ENCODE measurements at regions of chr1 and their contacts with region 1.

Region 1: DNA sequence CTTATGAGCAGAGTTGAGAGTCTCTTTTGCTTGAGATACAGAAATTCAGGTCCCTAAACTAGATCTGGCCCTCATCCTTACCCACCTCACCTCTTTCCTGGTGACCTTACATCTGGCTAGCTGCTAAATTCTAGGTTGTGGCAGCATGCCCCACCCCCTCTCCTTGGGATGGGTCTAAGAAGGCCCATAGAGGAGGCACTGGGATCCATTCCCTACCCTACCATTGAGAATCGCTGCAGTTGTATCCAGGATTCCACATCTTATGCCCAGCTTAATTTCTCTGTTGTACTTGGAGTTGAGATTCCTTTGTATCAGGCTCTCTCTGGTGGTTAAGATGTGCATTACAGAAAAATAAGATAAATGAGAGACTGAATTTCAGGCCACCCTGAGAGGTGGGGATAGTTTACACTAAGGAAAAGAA is 9.5 kb upstream of the TMEM39B start:
- DNase-seq: peak; percentile 76
- ATAC-seq: peak; percentile 64
- H3K4me3 ChIP-seq: no peak overlapping the region
- H3K27ac ChIP-seq: peak overlapping the region; percentile 60
- H3K4me1 ChIP-seq: peaks cover 14% of the 10 kb centered on the region
- H3K27me3 ChIP-seq: no peaks in the 10 kb centered on the region
- CTCF ChIP-seq: peak; percentile 70
- POLR2A ChIP-seq: no peak
- RAD21 ChIP-seq: peak; percentile 78

Region 2: GRCh38 chr1:31762726-31763670 is 300.3 kb before region 1 on chr1:
- CTCF ChIA-PET with region 1: no interaction called
- POLR2A ChIA-PET with region 1: no interaction called
- dilution Hi-C with region 1: no loop called
- in situ Hi-C with region 1: no loop called
- intact Hi-C with region 1: loop called (anchors 1 kb)
- DNase-seq: peak; percentile 27
- ATAC-seq: peak; percentile 40
- H3K4me3 ChIP-seq: peak overlapping the region; percentile 47
- H3K27ac ChIP-seq: no peak overlapping the region
- H3K4me1 ChIP-seq: peaks cover 21% of the 10 kb centered on the region
- H3K27me3 ChIP-seq: peaks cover 7% of the 10 kb centered on the region
- CTCF ChIP-seq: peak; percentile 71
- POLR2A ChIP-seq: no peak
- RAD21 ChIP-seq: peak; percentile 56

Region 3: DNA sequence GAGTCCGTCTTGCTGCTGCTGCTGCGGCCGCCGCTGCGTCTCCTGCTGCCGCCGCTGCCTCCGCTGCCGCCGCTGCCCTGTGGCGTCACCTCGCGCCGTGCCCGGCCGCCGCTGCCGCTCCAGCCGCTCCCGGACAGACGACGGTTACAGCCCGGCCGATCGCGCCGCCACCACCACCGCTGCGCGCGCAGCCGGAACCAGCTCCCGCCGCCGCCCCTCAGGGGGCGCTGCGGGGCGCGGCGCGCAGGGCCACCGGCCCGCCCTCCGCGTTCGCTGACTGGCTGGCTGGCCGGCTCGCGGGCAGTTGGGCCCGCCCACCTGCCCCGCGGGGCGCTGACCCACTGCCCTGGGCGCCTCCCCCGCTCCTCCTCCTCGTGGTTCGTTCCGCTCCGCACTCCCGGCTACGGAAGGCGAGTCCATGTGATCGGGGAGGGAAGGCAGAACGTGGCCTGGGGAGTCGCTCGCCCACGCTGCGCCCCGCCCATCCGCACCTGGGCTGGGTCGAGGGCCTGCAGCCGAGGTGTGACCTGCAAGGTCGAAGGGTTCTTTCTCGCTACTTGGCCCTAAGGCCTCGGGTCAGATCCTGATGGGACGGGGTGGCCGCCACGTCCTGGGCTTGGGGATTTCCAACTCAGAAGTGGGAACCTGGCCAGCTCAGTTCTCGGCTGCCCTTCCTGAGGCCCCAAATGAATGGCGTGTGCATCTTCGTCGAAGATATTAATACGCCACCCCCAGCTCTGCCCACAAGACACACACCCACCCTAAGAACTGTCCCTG is 124.9 kb before region 1 on chr1 and contains the start of gene PTP4A2:
- CTCF ChIA-PET with region 1: interaction called, 4 read pairs
- POLR2A ChIA-PET with region 1: interaction called, 3 read pairs
- dilution Hi-C with region 1: no loop called
- in situ Hi-C with region 1: no loop called
- intact Hi-C with region 1: loop called (anchors 2 kb)
- DNase-seq: peak; percentile 88
- ATAC-seq: peak; percentile 89
- H3K4me3 ChIP-seq: peak within 1 kb of the TSS; percentile 66
- H3K27ac ChIP-seq: peak within 1 kb of the TSS; percentile 98
- H3K4me1 ChIP-seq: peaks cover 16% of the 10 kb centered on the region
- H3K27me3 ChIP-seq: no peaks in the 10 kb centered on the region
- CTCF ChIP-seq: peak; percentile 86
- POLR2A ChIP-seq: peak; percentile 78
- RAD21 ChIP-seq: peak; percentile 32; the same call in 1 of the 2 replicates
- total RNA-seq, gene PTP4A2: 328 and 537 TPM in 2 replicates

Region 4: DNA sequence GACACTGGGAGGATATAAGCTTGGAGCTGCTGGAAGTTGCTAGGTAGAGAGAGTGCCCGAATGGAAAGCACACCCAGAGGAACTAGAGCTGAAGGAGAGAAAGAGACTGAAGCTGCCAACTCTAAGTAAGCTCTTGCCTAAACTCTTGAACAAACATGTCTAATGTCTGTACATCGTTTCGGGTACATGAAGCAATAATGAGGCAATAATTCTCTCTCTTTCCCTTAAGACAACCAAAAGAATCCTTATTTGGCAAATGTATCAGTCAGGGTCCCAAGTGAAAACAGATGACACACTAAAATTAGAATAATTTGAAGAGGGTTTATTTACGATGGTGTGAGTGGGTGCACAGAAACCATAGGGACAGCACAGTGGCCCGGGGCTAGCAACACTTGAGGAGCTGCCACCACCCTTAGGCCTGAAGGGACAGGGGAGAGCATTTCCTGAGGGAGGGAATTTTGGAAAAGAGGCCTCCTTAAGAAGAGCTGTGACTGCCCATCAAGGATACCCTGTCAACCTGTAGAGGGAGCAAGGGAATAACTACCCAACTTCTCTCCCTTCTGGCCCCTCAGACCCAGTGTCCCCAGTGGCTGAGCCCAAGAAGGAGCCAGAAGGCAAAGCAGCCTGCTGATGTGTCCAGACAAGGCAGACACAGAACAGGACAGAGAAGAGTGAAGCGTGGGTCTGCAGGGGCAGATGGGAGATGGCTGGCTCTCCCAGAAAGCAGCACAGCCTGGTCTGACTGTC is 85.7 kb before region 1 on chr1:
- CTCF ChIA-PET with region 1: no interaction called
- POLR2A ChIA-PET with region 1: no interaction called
- dilution Hi-C with region 1: no loop called
- in situ Hi-C with region 1: no loop called
- intact Hi-C with region 1: loop called (anchors 2 kb)
- DNase-seq: peak; percentile 47
- ATAC-seq: peak; percentile 75
- H3K4me3 ChIP-seq: no peak overlapping the region
- H3K27ac ChIP-seq: peak overlapping the region; percentile 22; the same call in 1 of the 2 replicates
- H3K4me1 ChIP-seq: peaks cover 6% of the 10 kb centered on the region
- H3K27me3 ChIP-seq: peaks cover 5% of the 10 kb centered on the region
- CTCF ChIP-seq: peak; percentile 39
- POLR2A ChIP-seq: no peak
- RAD21 ChIP-seq: peak; percentile 42

Region 5: DNA sequence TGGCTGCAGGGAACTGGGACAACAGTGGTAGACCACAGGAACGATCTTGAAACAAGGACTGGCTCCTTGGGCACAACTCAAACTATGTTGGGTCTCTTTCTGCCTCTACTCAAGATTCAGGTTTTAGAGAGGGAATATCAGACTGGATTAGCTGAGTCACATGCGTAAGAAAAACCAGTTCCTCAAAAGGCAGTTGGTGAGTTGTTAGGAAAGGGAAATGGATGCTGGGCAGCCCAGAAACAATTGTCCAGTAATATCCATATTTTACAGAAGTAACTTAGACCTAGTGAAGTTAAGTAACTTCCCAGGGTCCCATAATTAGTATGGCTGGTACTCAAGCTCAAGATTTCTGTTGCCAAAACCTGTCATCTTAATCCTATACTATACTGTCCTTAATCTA is 17.5 kb before region 1 on chr1:
- CTCF ChIA-PET with region 1: interaction called, 6 read pairs
- POLR2A ChIA-PET with region 1: interaction called, 7 read pairs
- dilution Hi-C with region 1: no loop called
- in situ Hi-C with region 1: no loop called
- intact Hi-C with region 1: loop called (anchors 1 kb)
- DNase-seq: no peak
- ATAC-seq: no peak
- H3K4me3 ChIP-seq: no peak overlapping the region
- H3K27ac ChIP-seq: no peak overlapping the region
- H3K4me1 ChIP-seq: peaks cover 12% of the 10 kb centered on the region
- H3K27me3 ChIP-seq: no peaks in the 10 kb centered on the region
- CTCF ChIP-seq: no peak
- POLR2A ChIP-seq: no peak
- RAD21 ChIP-seq: no peak

Measured in IMR-90 (cell line).